PC-9 (cell line): ENCODE measurements at regions of chr2 and their contacts with region 1.

Region 1: DNA sequence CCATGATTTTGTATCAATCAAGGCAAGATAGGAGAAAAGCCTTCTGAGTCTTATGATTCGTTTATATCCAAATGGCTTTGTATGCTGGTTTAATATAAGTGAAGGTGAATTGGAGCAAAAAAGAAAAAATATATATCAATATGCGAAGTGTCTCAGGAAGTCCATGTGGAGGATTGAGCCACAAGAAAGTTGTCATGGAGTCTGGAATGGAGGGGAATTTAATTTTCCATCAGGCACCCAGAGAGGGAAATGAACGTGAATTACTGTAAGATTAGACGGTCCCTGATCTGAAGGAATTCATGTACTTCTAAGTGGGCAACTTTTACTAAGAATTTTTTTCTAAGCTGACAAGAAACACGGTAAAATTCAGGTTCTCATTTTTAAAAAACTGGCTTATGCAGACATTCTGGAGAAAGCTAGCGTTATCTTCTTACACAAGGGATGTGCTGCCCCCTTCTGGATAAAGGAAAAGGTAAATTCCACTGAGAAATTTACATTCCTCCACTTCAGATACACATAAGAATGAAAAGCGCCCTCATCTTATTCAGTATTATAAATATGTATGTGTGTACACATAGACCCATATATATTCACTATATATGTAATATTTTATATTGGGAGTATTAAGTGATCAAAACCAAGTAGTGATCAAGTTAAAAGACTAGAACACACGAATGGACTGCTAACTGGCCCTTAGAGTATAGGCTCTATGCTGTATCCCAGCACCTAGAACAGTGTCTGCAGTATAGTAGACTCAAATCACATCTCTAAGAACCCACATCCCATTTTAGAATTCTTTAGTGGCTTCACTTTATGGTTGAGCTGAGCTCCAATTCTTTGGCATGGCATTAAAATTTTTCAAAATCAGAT is 289.0 kb upstream of the TFPI start:
- DNase-seq: peak in 1 of 2 experiments; percentile 0
- H3K4me3 ChIP-seq: no peak overlapping the region
- H3K27ac ChIP-seq: no peak overlapping the region
- H3K4me1 ChIP-seq: no peaks in the 10 kb centered on the region
- H3K27me3 ChIP-seq: no peaks in the 10 kb centered on the region
- CTCF ChIP-seq: peak; percentile 70

Region 2: GRCh38 chr2:187148059-187148714 is 695.0 kb before region 1 on chr2:
- CTCF ChIA-PET with region 1: no interaction called
- POLR2A ChIA-PET with region 1: no interaction called
- intact Hi-C with region 1: loop called (anchors 5 kb)
- DNase-seq: no peak
- H3K4me3 ChIP-seq: no peak overlapping the region
- H3K27ac ChIP-seq: no peak overlapping the region
- H3K4me1 ChIP-seq: no peaks in the 10 kb centered on the region
- H3K27me3 ChIP-seq: no peaks in the 10 kb centered on the region
- CTCF ChIP-seq: no peak

Region 3: DNA sequence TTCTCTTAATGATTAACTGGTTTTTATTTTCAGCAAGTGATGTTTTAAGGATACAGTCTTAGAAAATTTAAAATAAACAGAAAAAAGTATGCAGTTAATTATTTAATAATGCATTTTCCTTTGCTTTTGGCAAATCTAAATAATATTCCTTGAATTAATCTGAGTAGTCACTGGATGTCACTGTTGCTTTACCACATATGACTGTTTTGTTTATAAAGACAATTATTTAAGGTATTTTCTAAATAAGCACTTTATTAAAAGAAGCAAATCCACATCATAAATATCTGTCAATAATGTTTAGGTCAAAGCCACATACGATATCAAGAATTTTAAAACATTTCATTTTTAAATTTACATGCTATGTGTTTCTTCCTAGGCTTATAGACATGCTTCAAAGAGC is 248.4 kb before region 1 on chr2:
- CTCF ChIA-PET with region 1: no interaction called
- POLR2A ChIA-PET with region 1: no interaction called
- intact Hi-C with region 1: loop called (anchors 5 kb)
- DNase-seq: no peak
- H3K4me3 ChIP-seq: no peak overlapping the region
- H3K27ac ChIP-seq: no peak overlapping the region
- H3K4me1 ChIP-seq: no peaks in the 10 kb centered on the region
- H3K27me3 ChIP-seq: no peaks in the 10 kb centered on the region
- CTCF ChIP-seq: 0 out of 2 replicates have a peak, but pooled peaks have one; percentile 20

Region 4: GRCh38 chr2:187922846-187923245 is 79.6 kb after region 1 on chr2:
- CTCF ChIA-PET with region 1: no interaction called
- POLR2A ChIA-PET with region 1: no interaction called
- intact Hi-C with region 1: no loop called
- DNase-seq: no peak
- H3K4me3 ChIP-seq: no peak overlapping the region
- H3K27ac ChIP-seq: no peak overlapping the region
- H3K4me1 ChIP-seq: no peaks in the 10 kb centered on the region
- H3K27me3 ChIP-seq: no peaks in the 10 kb centered on the region
- CTCF ChIP-seq: no peak

Region 5: DNA sequence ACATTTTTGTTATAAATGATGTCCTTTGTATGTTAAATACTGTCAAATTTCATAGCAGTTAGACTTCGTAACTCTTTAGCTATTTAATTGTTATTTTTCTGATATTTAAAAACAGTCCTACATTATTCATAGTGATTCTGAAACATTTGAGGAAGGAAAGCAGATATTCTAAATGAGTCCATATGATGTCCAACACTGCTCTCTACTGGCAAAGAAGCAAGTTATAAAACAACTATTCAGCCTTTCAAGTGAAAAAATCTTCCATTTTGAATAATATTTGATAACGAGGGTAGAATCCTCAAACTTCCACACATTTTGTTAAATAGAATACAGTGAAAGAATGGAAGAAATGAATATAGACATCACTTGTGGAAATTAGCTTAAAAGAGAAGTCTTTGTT is 669.2 kb after region 1 on chr2:
- CTCF ChIA-PET with region 1: no interaction called
- POLR2A ChIA-PET with region 1: no interaction called
- intact Hi-C with region 1: loop called (anchors 2 kb)
- DNase-seq: no peak
- H3K4me3 ChIP-seq: no peak overlapping the region
- H3K27ac ChIP-seq: no peak overlapping the region
- H3K4me1 ChIP-seq: no peaks in the 10 kb centered on the region
- H3K27me3 ChIP-seq: no peaks in the 10 kb centered on the region
- CTCF ChIP-seq: peak; percentile 74